ENCODE measurements at regions of chr3 and their contacts with region 1.

Region 1: DNA sequence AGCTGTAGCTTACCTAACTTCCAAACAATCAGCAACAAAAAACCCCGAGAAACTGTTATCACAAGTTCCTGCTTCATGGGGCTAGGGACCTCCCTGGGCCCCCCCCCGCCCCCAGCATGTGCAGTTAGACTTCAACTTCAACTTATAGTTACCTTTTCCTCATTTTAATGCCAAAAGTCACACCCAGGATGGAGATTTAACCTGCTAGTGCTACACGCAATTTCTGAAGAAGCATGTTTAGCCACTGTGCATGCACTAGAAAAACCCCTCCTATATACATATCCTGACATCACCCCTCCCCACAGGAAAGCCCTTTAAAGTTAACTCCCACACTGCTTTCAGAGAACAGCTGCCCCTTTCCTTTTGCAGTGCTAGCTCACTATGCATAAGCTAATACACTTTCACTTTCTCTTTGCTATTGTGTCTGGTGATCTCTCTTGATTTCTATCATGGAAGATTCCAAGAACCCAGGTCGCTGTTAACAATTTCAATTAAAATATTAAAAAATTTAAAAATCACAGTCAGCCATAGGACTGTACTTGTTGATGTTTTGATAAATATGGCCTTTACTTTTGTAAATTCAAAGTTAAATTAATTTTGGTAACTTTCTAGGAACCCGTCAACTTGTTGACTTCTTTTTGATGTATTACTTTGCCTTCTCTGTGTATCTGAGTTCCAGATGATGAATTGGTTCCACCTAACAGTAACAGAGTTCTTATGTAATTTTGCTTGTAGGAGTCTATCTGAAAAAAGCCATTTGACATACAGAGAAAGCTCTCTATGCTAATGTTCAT is 75.2 kb upstream of the ACAD9 start:
- DNase-seq: peak; percentile 77
- H3K4me3 Mint-ChIP-seq: peak overlapping the region; percentile 66
- H3K27ac Mint-ChIP-seq: peak overlapping the region; percentile 95
- H3K4me1 Mint-ChIP-seq: peaks cover 82% of the 10 kb centered on the region
- H3K27me3 Mint-ChIP-seq: no peaks in the 10 kb centered on the region

Region 2: DNA sequence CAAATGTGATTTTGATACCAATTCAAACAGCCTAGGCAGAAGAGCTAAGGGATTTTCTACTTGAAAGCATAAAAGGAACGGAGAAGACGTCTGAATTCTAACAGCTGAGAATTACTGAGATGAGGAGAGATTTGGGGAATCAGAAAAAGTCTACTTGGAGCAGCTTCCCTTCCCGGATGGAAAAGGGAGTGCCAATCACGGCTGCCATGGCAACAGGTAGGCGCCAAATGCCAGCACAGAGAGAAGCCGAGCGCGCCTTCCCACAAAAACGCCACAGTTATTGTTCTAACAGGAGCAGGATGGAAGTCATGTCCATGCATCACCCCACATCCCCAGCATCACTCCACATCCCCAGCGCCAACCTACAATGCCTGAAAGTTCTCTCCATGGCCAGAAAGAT is 1452.9 kb before region 1 on chr3:
- intact Hi-C with region 1: no loop called
- DNase-seq: no peak
- H3K4me3 Mint-ChIP-seq: no peak overlapping the region
- H3K27ac Mint-ChIP-seq: no peak overlapping the region
- H3K4me1 Mint-ChIP-seq: no peaks in the 10 kb centered on the region
- H3K27me3 Mint-ChIP-seq: peaks cover 4% of the 10 kb centered on the region

Region 3: DNA sequence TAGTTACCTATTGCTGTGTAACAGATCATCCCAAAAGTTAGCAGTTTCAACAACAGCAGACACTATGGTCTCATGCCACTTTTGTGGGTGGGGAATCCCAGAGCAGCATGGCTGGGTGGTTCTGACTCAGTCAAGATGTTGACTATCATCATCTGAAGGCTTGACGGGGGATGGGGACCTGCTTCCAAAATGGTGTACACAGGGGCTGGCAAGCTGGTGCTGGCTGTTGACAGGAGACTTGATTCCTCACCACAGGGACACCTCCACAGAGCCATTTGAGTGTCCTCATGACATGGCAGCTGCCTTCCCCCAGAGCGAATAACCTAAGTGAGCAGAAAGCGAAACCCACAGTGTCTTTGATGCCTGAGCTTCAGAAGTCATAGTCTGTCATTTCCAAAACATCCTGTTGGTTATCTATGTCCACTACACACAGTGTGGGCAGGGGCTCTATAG is 356.6 kb before region 1 on chr3:
- intact Hi-C with region 1: loop called (anchors 5 kb)
- DNase-seq: peak; percentile 72
- H3K4me3 Mint-ChIP-seq: peak overlapping the region; percentile 66
- H3K27ac Mint-ChIP-seq: peak overlapping the region; percentile 96
- H3K4me1 Mint-ChIP-seq: peaks cover 64% of the 10 kb centered on the region
- H3K27me3 Mint-ChIP-seq: peaks cover 2% of the 10 kb centered on the region

Region 4: DNA sequence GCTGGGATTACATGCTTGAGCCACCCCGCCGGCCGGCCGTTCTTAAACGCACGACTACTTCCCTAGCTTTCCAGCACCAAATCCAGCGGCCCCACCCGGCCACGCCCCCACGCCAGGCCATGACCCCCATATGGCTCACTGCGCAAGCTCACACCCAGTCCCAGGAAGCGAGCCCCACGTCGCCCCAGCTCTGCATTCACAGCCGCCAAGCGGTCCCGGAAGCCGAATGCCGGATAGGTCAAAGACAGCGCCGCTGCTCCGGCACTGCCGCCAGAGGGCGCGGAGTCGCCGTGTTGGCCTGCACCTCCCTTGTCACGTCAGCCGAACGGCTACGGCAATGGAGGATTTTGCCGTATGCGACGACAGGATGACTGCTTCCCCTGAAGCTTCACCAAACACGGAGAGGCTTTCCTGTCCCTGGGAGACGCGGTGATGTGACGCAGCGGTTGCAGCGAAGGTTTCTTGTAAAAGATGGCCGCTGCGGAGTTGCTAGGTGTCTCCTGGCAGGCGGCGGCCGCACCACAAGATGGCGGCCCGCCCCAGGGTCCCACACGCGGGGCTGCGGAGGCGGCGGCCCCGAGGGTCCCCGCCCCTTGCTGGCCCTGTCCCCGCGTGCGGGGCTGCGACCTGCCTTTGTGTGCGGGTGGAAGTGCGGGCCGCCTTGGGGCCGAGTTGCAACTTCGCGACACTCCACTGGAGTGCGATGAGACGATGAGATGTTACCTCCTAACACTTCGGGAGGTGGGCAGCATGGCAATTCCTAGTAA is 123.4 kb before region 1 on chr3:
- intact Hi-C with region 1: loop called (anchors 1 kb)
- DNase-seq: peak; percentile 96
- H3K4me3 Mint-ChIP-seq: peak overlapping the region; percentile 85
- H3K27ac Mint-ChIP-seq: peak overlapping the region; percentile 89
- H3K4me1 Mint-ChIP-seq: peaks cover 29% of the 10 kb centered on the region
- H3K27me3 Mint-ChIP-seq: no peaks in the 10 kb centered on the region

Region 5: GRCh38 chr3:128787256-128788240 is 16.7 kb before region 1 on chr3:
- intact Hi-C with region 1: loop called (anchors 1 kb)
- DNase-seq: no peak
- H3K4me3 Mint-ChIP-seq: peak overlapping the region; percentile 70
- H3K27ac Mint-ChIP-seq: peak overlapping the region; percentile 97
- H3K4me1 Mint-ChIP-seq: peaks cover 83% of the 10 kb centered on the region
- H3K27me3 Mint-ChIP-seq: no peaks in the 10 kb centered on the region

Region 6: GRCh38 chr3:128993461-128994173 is 189.4 kb after region 1 on chr3 and contains the start of gene CFAP92:
- intact Hi-C with region 1: loop called (anchors 1 kb)
- DNase-seq: peak; percentile 90
- H3K4me3 Mint-ChIP-seq: peak within 1 kb of the TSS; percentile 72
- H3K27ac Mint-ChIP-seq: peak within 1 kb of the TSS; percentile 43
- H3K4me1 Mint-ChIP-seq: peaks cover 36% of the 10 kb centered on the region
- H3K27me3 Mint-ChIP-seq: peaks cover 14% of the 10 kb centered on the region
- total RNA-seq, gene CFAP92: 0.13 and 0.29 TPM in 2 replicates

Region 7: DNA sequence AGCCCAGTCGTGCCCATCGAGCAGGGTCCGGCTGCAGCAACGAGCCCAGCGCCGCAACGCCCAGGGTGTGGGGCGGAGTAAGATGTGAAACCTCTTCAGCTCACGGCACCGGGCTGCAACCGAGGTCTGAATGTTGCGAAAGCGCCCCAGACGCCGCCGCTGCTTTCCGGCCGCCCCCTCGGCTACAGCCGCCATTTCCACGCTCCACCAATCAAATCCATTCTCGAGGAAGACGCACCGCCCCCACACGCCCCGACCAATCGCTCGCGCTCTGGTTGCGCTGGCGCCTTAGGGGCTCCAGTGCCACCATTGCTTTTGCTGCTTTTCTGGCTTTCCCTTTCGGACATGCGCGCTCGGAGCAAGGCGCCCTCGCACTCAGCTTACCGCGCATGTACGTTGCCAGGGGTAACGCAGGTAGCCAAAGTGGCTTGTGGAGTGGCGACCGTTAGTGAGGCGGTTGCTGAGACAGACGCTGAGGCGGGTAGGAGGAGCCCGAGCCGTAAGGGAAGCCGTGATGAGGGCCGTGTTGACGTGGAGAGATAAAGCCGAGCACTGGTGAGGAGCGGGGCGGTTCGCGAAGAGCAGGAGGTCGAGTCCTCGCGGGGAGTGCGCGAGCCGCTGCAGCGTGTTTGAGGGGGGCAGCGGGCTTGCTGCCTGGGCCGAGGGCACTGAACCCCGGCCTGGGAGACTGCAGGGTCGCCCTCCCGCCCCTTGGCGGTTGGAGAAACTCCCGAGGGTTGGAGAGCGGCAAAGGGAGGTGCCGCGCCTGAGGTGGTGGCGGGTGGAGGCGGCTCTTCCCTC is 635.8 kb after region 1 on chr3 and contains the starts of genes IFT122 and MBD4:
- intact Hi-C with region 1: loop called (anchors 10 kb)
- DNase-seq: peak; percentile 100
- H3K4me3 Mint-ChIP-seq: peak within 1 kb of the TSS; percentile 89
- H3K27ac Mint-ChIP-seq: peak within 1 kb of the TSS; percentile 98
- H3K4me1 Mint-ChIP-seq: peaks cover 63% of the 10 kb centered on the region
- H3K27me3 Mint-ChIP-seq: no peaks in the 10 kb centered on the region
- total RNA-seq, gene IFT122: 10.0 and 14.7 TPM in 2 replicates
- total RNA-seq, gene MBD4: 44.1 and 53.3 TPM in 2 replicates

Measured in activated T-helper 1 cell treated with anti-CD3 and anti-CD28 coated beads, Interleukin-12 subunit alpha, Interleukin-12 subunit beta, Interleukin-2, Interleukin-4 antibody, amounts not matched to agents 30 ng/mL and 10 ng/mL and 1 ng/mL, durations not matched to agents 14 hours and 24 hours and 36 hours (primary cell).